A673 (cell line): ENCODE measurements at regions of chr1 and their contacts with region 1.

Region 1: GRCh38 chr1:21508580-21509350 is 458 bp upstream of the ALPL start:
- DNase-seq: peak; percentile 71
- H3K4me3 ChIP-seq: no peak overlapping the region
- H3K27ac ChIP-seq: no peak overlapping the region
- H3K4me1 ChIP-seq: peaks cover 8% of the 10 kb centered on the region
- H3K27me3 ChIP-seq: no peaks in the 10 kb centered on the region
- CTCF ChIP-seq: peak; percentile 53

Region 2: DNA sequence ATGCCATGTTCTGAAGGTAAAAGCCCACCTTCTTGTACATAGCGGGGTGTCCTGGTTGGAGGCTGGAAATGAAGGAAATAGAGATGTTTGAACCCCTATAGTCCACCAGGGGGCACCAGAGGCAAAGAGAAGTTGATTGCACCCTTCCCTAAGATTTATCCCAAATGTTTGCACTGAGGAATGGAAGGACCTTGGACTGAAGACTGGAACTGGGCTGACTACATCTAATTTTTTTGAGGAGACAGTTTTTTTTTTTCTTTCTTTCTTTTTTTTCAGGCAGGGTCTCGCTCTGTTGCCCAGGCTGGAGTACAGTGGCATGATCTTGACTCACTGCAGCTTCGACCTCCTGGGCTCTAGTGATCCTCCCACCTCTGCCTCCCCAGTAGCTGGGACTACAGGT is 276.7 kb before region 1 on chr1:
- CTCF ChIA-PET with region 1: no interaction called
- POLR2A ChIA-PET with region 1: no interaction called
- intact Hi-C with region 1: loop called (anchors 10 kb)
- DNase-seq: peak; percentile 71
- H3K4me3 ChIP-seq: no peak overlapping the region
- H3K27ac ChIP-seq: no peak overlapping the region
- H3K4me1 ChIP-seq: no peaks in the 10 kb centered on the region
- H3K27me3 ChIP-seq: no peaks in the 10 kb centered on the region
- CTCF ChIP-seq: peak; percentile 78

Region 3: GRCh38 chr1:21457654-21458053 is 51.1 kb before region 1 on chr1:
- CTCF ChIA-PET with region 1: no interaction called
- POLR2A ChIA-PET with region 1: no interaction called
- intact Hi-C with region 1: no loop called
- DNase-seq: no peak
- H3K4me3 ChIP-seq: no peak overlapping the region
- H3K27ac ChIP-seq: no peak overlapping the region
- H3K4me1 ChIP-seq: no peaks in the 10 kb centered on the region
- H3K27me3 ChIP-seq: no peaks in the 10 kb centered on the region
- CTCF ChIP-seq: no peak

Region 4: DNA sequence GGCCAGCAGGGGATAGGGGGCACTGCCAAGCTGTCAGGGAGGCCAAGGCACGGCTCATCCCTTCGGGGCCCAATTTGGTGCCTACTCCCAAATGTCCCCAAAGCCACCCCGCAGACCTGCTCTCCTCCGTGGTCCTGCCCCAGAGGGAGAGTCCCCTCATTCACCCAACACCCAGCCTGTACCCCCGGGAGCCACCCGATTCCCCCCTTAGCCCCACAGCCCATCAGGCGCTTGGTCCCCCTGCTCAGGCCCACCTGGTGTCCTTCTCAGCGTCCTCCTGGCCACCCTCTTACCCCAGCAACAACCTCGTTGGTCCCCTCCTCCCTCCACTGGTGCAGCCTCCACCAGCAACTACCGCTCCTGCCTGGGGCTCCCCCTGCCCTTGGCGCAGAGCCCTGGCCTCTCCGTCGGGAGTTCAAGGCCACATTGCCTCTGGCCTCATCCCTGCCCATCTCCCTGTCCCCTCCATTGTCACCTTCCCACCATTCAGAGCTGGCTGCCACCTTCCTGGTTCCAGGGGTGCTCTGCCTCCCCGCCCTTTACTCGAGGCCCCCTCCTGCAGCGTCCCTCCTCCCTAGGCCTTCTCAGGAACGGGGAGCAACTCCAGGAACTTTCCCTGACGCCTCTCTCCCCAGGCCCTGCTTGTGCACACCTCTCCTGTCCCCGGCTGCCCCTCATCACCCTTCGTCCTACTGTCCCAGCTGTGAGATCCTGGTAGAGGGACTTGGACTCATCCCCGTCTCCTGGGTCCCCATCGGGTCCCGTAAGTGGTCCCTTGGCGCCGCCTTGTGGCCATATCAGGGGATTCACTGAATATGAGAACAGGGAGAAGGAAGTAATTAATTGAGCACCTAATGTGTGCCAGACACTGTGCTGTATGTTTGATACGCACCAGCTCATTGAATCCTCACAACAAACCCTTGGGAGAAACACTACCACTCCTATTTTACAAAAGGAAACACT is 86.5 kb after region 1 on chr1:
- CTCF ChIA-PET with region 1: interaction called, 3 read pairs
- POLR2A ChIA-PET with region 1: interaction called, 3 read pairs
- intact Hi-C with region 1: loop called (anchors 5 kb)
- DNase-seq: peak; percentile 89
- H3K4me3 ChIP-seq: no peak overlapping the region
- H3K27ac ChIP-seq: no peak overlapping the region
- H3K4me1 ChIP-seq: peaks cover 14% of the 10 kb centered on the region
- H3K27me3 ChIP-seq: no peaks in the 10 kb centered on the region
- CTCF ChIP-seq: peak; percentile 89

Region 5: GRCh38 chr1:21659099-21659923 is 150.5 kb after region 1 on chr1:
- CTCF ChIA-PET with region 1: no interaction called
- POLR2A ChIA-PET with region 1: no interaction called
- intact Hi-C with region 1: loop called (anchors 5 kb)
- DNase-seq: peak; percentile 75
- H3K4me3 ChIP-seq: peak overlapping the region; percentile 29
- H3K27ac ChIP-seq: no peak overlapping the region
- H3K4me1 ChIP-seq: peaks cover 19% of the 10 kb centered on the region
- H3K27me3 ChIP-seq: no peaks in the 10 kb centered on the region
- CTCF ChIP-seq: peak; percentile 88